ENCODE measurements at regions of chr3 and their contacts with region 1.

Region 1: GRCh38 chr3:129627429-129628168 is 21.1 kb upstream of the PLXND1 start:
- DNase-seq: peak; percentile 55 to 82 (median 76)
- H3K4me3 ChIP-seq: peak overlapping the region; percentile 46 to 85 (median 71)
- H3K27ac ChIP-seq: peak overlapping the region; percentile 63 to 98 (median 93)
- H3K27me3 ChIP-seq: no peaks in the 10 kb centered on the region
- CTCF ChIP-seq: peak; percentile 50 to 92 (median 85)

Region 2: DNA sequence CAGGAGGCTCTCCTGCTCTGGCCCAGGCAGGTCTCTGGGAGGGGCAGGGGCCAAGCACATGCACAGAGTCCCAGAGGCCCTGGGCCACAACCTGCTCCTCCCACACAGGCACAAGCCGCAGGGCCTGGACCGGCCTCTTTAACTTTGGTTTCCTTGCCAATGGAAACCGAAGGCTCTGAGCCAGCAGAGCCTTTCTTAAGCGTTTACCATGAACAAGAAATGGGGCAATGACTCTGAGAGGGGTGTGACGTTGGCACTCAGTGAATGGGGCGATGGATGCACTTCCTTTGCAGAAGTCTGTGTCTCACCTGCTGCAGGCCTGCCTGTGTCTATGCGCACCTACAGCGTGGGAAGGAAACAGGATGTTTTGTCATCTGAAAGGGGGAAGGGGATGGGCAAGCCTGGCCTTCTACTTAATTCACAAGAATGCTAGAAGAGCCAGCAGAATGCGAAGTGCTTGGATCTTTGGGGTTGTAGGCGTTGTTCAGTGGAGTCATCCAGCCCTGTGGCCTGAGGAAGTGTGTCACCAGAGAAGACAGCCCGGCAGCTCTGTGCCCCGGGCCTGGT is 145.8 kb before region 1 on chr3:
- intact Hi-C with region 1: no loop called
- DNase-seq: no peak
- H3K4me3 ChIP-seq: no peak overlapping the region
- H3K27ac ChIP-seq: peak overlapping the region in 51 of 59 donors; percentile 6 to 88 (median 66)
- H3K27me3 ChIP-seq: no peaks in the 10 kb centered on the region
- CTCF ChIP-seq: no peak

Region 3: GRCh38 chr3:129596194-129597086 is 31.2 kb before region 1 on chr3:
- intact Hi-C with region 1: loop called in 1 of 2 experiments (anchors 1 kb)
- DNase-seq: peak; percentile 25 to 92 (median 86)
- H3K4me3 ChIP-seq: peak overlapping the region in 53 of 59 donors; percentile 9 to 53 (median 36)
- H3K27ac ChIP-seq: peak overlapping the region; percentile 77 to 98 (median 95)
- H3K27me3 ChIP-seq: no peaks in the 10 kb centered on the region
- CTCF ChIP-seq: peak in 15 of 56 donors; percentile 4 to 37 (median 14)

Region 4: GRCh38 chr3:129824926-129825541 is 197.4 kb after region 1 on chr3:
- intact Hi-C with region 1: loop called in 1 of 2 experiments (anchors 2 kb)
- DNase-seq: peak in 2 of 10 donors; percentile 25 to 38
- H3K4me3 ChIP-seq: no peak overlapping the region
- H3K27ac ChIP-seq: no peak overlapping the region
- H3K27me3 ChIP-seq: no peaks in the 10 kb centered on the region
- CTCF ChIP-seq: peak; percentile 64 to 92 (median 80)

Region 5: DNA sequence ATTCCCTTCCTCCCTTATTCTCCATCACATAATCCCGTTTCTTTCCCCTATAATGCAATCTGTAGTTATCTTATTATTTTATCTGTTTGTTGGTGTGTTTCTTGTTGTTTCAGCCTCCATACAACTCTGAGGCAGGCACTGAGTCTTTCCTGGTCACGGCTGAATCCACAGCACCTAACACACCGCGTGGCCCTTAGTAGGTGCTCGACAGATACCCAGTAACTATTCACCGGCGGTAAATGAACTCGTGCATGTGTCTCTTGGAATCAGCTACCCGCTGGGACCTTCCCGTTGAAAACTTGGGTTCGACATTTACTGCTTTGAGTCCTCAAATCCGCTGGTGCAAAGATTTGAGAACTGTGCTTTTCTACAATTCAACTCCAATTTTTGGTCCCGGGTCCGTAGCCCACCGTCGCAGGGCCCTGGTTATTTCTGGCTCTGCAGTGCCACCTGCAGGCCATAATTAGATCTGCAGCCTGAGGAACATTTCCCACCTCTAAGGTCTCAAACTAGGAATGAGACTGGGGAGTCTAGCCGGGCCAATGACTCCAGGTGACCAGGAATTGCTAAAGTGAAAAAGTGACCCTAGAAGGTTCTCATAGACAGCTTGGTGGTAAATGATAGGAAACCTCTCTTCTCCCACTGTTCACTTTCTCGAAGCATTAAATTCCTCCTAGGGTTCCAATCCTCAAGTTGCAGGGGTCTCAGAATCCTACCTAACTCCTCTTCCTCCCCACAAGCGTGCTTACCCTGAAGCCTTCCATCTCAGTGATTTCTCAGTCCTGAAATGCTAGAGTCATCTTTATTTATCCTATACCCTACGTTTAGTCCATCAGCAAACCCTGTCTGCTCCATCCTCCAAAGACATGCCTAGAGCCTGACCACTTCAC is 306.9 kb after region 1 on chr3:
- intact Hi-C with region 1: loop called (anchors 1 to 5 kb)
- DNase-seq: peak in 5 of 10 donors; percentile 28 to 64 (median 39)
- H3K4me3 ChIP-seq: peak overlapping the region in 47 of 59 donors; percentile 4 to 56 (median 35)
- H3K27ac ChIP-seq: peak overlapping the region in 1 of 59 donors; percentile 3
- H3K27me3 ChIP-seq: no peaks in the 10 kb centered on the region
- CTCF ChIP-seq: peak; percentile 83 to 98 (median 95)

Region 6: GRCh38 chr3:130111185-130111864 is 483.7 kb after region 1 on chr3:
- intact Hi-C with region 1: loop called in 1 of 2 experiments (anchors 5 kb)
- DNase-seq: peak; percentile 97 to 99 (median 98)
- H3K4me3 ChIP-seq: peak overlapping the region; percentile 49 to 93 (median 78)
- H3K27ac ChIP-seq: peak overlapping the region in 49 of 59 donors; percentile 27 to 92 (median 66)
- H3K27me3 ChIP-seq: no peaks in the 10 kb centered on the region
- CTCF ChIP-seq: peak in 1 of 56 donors; percentile 7